PC-9 (cell line): ENCODE measurements at regions of chr1 and their contacts with region 1.

Region 1: DNA sequence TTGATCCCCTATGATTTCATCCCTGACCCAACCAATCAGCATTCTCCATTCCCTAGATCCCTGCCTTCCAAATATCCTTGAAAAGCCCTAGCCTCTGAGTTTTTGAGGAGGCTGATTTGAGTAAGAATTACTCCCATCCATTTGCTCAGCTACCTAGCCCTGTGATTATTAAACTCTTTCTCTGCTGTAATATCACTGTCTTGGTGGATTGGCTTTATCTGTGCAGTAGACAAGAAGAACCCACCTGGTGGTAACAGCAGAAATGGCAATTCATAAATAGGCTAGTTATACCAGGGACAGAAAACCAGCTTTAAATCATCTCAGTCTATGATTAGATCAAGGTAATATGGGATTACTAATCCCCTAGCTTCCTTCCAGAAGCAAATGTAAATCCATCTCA is 13.0 kb downstream of the IL20 start:
- DNase-seq: no peak
- H3K4me3 ChIP-seq: no peak overlapping the region
- H3K27ac ChIP-seq: no peak overlapping the region
- H3K4me1 ChIP-seq: no peaks in the 10 kb centered on the region
- H3K27me3 ChIP-seq: no peaks in the 10 kb centered on the region
- CTCF ChIP-seq: no peak

Region 2: DNA sequence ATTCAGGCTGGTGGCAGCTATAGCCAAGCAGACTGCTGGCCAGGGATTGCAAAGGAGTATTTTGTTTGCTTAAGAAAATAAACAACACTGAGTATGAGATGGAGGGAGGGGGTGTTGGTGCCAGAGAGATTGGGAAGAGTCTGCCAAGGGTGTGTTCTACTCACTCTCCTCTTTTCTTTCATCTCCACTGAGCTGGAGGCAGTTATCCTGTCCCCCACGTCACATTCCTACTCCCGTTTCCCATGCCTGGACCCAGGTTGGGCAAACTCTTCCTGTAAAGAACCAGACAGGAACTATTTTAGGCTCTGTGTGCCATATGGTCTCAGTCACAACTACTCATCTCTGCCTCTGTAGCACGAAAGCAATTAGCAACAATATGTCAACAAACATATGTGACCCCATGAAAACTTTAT is 17.4 kb after region 1 on chr1:
- CTCF ChIA-PET with region 1: interaction called, 11 read pairs
- POLR2A ChIA-PET with region 1: no interaction called
- intact Hi-C with region 1: no loop called
- DNase-seq: peak in 1 of 2 experiments; percentile 27
- H3K4me3 ChIP-seq: no peak overlapping the region
- H3K27ac ChIP-seq: peak overlapping the region; percentile 24; the same call in 1 of the 2 replicates
- H3K4me1 ChIP-seq: peaks cover 37% of the 10 kb centered on the region
- H3K27me3 ChIP-seq: no peaks in the 10 kb centered on the region
- CTCF ChIP-seq: no peak

Region 3: DNA sequence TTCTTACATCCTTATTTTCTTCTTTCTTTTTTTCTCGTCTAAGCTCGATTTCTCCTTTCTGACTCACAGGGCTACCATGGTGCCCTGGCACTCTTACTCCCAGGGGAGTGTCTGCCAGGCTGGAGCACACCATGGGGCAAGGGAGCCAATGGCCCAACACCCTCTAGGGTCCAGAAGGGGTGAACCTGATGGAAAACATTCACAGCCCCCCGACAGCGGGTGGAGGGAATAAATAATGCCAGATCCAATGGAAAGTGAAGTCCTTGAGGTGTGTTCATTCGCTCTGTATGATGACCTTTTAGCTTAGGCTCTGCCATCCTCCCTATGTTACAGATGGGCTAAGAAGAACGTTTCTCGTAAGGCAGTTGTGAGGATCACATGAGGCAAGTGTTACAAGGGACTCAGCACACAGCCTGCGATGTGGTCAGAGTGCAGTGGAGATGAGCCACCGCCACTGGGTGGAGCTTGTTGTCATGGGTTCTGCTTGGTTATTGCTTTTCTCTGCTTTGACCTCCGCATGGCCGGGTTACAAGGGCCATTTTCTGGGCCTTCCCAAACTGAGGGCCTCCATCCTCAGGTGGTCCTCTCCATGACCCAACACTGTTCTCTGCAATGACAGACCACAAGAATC is 46.8 kb after region 1 on chr1:
- CTCF ChIA-PET with region 1: no interaction called
- POLR2A ChIA-PET with region 1: no interaction called
- intact Hi-C with region 1: no loop called
- DNase-seq: no peak
- H3K4me3 ChIP-seq: no peak overlapping the region
- H3K27ac ChIP-seq: no peak overlapping the region
- H3K4me1 ChIP-seq: peaks cover 19% of the 10 kb centered on the region
- H3K27me3 ChIP-seq: no peaks in the 10 kb centered on the region
- CTCF ChIP-seq: no peak